ENCODE measurements at regions of chr1 and their contacts with region 1.

Region 1: GRCh38 chr1:110196917-110197765 is 13.0 kb upstream of the KCNC4 start:
- DNase-seq: peak; percentile 42
- ATAC-seq: peak; percentile 95
- H3K4me3 Mint-ChIP-seq: no peak overlapping the region
- H3K27ac Mint-ChIP-seq: no peak overlapping the region
- H3K4me1 Mint-ChIP-seq: peaks cover 2% of the 10 kb centered on the region; the same call in 1 of the 2 replicates
- H3K27me3 Mint-ChIP-seq: no peaks in the 10 kb centered on the region
- CTCF ChIP-seq: peak; percentile 87

Region 2: DNA sequence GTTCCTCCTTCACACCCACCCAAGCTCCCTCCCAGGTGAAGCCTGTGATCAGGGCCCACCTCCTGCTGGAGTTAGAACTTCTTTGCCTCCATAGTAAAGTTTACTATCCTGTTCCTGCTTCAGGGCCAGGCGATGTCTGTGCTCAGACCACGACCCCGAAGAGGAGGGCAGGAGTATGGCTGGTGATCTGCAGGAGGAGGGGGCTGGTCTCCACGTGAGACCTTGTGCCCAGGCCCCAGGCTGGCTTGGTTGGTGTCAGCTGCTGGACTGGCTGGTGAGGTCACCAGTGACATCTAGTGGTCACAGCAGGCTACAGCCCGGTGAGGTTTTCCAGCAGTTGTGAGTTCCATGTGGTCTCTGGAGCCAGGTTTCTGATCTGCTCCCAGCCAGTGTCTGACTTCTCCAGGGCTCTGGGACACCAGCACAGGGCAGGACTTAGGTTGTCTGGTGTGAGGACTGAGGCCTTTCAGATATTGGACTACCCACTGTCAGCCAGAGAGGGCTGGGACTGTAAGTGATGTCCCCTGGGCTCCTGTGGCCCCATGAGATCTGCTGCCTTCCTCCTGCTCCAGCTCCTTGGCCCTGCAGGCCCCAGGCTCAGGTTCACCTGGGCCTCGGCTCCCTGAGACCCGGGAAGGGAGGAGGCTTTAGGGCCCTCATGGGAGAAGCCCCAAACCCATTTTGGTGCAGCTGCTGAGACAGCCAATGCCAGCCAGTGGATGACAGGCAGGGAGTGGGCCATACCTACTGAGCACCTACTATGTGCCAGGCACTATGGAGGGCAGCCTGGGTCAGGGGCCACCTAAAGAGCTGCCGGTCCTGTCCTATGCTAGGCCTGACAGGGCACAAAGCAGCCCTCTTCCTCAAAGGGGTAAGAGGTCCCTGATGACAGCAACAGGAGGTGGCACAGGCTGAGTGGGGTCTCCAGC is 90.9 kb before region 1 on chr1:
- CTCF ChIA-PET with region 1: interaction called, 10 read pairs
- POLR2A ChIA-PET with region 1: no interaction called
- DNase-seq: peak; percentile 83
- ATAC-seq: peak; percentile 97
- H3K4me3 Mint-ChIP-seq: no peak overlapping the region
- H3K27ac Mint-ChIP-seq: no peak overlapping the region
- H3K4me1 Mint-ChIP-seq: no peaks in the 10 kb centered on the region
- H3K27me3 Mint-ChIP-seq: no peaks in the 10 kb centered on the region
- CTCF ChIP-seq: peak; percentile 81

Region 3: GRCh38 chr1:110229348-110230001 is 32.3 kb after region 1 on chr1:
- CTCF ChIA-PET with region 1: no interaction called
- POLR2A ChIA-PET with region 1: no interaction called
- DNase-seq: no peak
- ATAC-seq: peak; percentile 59
- H3K4me3 Mint-ChIP-seq: no peak overlapping the region
- H3K27ac Mint-ChIP-seq: peak overlapping the region; percentile 66
- H3K4me1 Mint-ChIP-seq: peaks cover 4% of the 10 kb centered on the region
- H3K27me3 Mint-ChIP-seq: no peaks in the 10 kb centered on the region
- CTCF ChIP-seq: no peak

Region 4: DNA sequence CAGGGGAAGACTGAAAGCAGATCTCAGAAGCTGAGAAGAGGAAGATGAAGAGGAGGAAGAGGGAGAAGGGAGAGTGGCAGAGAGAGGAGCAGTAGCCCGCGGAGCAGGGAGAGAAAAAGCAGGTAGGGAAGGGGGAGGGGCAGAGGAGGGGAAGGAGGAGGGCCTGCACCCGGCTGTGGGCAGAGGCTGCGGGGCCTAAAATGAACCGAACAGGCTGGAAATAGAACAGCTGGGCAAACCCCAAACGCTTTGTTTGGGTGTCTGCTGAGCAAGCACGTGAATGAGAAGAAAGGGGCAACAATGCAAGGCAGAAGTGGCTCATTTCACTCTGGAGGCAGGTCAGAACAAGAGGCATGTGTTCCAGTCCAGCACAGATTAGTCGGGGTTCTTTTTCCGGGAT is 46.4 kb after region 1 on chr1:
- CTCF ChIA-PET with region 1: interaction called, 11 read pairs
- POLR2A ChIA-PET with region 1: no interaction called
- DNase-seq: peak; percentile 31
- ATAC-seq: peak; percentile 73
- H3K4me3 Mint-ChIP-seq: no peak overlapping the region
- H3K27ac Mint-ChIP-seq: no peak overlapping the region
- H3K4me1 Mint-ChIP-seq: peaks cover 39% of the 10 kb centered on the region
- H3K27me3 Mint-ChIP-seq: peaks cover 16% of the 10 kb centered on the region; the same call in 1 of the 2 replicates
- CTCF ChIP-seq: no peak

Region 5: DNA sequence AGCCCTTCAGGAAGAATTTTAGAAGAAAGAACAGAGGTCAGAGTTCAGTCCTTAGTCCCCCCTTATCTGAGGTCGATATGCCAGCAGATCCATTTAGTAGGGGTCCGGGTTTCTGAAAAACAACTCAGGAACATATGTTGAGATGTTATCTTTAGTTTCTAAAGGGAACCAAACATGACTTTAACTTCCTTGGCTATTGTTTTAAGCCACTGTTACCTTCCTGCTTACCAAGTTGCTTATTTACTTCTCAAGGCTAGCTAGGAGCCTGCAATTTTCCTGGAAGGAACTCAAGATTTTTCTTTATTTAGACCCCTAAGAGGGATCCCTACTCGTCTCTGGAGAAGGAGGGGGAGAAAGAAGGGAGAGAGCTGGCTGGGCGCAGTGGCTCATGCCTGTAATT is 67.3 kb after region 1 on chr1:
- CTCF ChIA-PET with region 1: no interaction called
- POLR2A ChIA-PET with region 1: no interaction called
- DNase-seq: no peak
- ATAC-seq: no peak
- H3K4me3 Mint-ChIP-seq: no peak overlapping the region
- H3K27ac Mint-ChIP-seq: no peak overlapping the region
- H3K4me1 Mint-ChIP-seq: peaks cover 19% of the 10 kb centered on the region
- H3K27me3 Mint-ChIP-seq: peaks cover 15% of the 10 kb centered on the region
- CTCF ChIP-seq: no peak

Region 6: DNA sequence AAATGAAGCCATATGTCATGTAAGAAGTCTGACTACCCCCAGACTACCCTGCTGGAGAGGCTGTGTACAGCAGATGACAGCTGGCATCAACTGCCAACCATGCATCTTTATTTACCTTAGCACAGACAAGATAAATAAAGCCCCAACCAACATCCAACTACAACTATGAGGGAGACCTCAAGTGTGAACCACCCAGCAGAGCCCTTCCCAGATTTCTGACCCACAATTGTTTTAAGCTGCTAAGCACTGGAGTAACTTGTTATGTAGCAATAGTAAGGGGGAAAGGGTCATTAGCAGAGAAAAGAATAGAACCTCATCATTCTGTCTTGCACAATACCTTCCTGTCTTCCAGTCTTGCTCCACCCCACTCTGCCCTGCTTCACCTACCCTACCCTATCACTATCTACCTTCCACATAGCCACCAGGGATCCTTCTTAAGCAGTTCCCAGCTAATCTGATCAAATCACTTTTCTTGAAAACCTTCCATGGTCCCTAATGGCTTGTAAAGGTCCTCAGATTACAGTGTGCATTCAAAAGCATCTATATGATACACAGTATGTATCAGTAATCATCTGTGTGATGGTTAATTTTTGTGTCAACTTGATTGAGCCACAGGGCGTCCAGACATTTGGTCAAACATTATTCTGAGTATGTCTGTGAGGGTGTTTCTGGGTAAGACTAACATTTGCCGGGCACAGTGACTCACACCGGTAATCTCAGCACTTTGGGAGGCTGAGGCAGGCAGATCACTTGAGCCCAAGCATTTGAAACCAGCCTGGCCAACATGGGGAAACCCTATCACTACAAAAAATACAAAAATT is 122.4 kb after region 1 on chr1:
- CTCF ChIA-PET with region 1: interaction called, 76 read pairs
- POLR2A ChIA-PET with region 1: no interaction called
- DNase-seq: no peak
- ATAC-seq: no peak
- H3K4me3 Mint-ChIP-seq: no peak overlapping the region
- H3K27ac Mint-ChIP-seq: no peak overlapping the region
- H3K4me1 Mint-ChIP-seq: no peaks in the 10 kb centered on the region
- H3K27me3 Mint-ChIP-seq: no peaks in the 10 kb centered on the region
- CTCF ChIP-seq: no peak

Region 7: DNA sequence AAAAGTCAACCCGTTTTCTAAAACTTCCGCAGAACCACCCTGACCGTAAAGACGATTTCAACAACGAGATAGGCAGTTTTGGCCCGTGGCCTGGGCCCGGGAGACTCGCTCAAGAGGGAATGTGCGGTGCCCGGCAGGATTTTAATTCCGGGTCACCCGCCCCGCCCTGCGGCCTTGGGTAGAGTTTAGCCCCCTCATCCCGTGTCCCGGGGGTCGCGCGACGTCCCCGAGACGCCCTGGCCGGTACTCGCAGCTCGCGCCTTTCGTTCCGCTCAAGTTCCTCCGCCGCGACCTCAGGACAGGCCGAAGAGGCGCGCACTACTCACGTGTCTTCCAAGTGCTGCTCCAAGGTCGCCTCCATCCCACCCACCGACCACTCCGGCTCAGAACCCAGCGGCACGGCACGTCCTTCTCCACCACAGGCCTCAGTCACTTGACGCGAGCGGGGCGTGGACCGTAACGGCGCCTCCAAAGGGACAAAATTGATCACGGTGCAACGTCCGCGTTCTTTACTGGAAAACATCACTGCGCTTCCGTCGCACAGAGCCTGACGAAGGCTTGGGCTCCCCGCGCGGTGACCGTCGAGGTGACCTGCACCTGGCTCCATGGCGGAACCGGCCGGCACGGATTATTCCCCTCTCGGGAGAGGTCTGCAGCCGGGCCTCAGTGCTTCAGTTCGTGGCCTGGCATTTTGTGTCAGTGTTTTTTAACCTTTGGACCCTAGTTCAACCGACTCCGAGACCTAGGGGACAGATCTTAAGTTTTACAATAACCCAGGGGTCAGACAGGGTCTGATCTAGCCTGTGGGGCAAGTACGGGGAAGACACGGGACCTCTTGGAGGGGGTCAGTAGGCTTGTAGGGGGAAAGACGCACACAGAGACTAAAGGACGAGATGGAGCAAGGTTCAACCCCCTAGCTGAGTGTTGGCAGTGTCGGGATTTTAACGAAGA is 210.4 kb after region 1 on chr1 and contains the start of gene LAMTOR5:
- CTCF ChIA-PET with region 1: interaction called, 15 read pairs
- POLR2A ChIA-PET with region 1: no interaction called
- DNase-seq: peak; percentile 87
- ATAC-seq: peak; percentile 89
- H3K4me3 Mint-ChIP-seq: peak within 1 kb of the TSS; percentile 97
- H3K27ac Mint-ChIP-seq: peak within 1 kb of the TSS; percentile 98
- H3K4me1 Mint-ChIP-seq: peaks cover 14% of the 10 kb centered on the region
- H3K27me3 Mint-ChIP-seq: 0 out of 2 replicates have a peak, but pooled peaks cover 2% of the 10 kb centered on the region
- CTCF ChIP-seq: no peak
- total RNA-seq, gene LAMTOR5: 76.0 to 106 TPM (median 93.0 TPM) in 3 replicates

Region 8: GRCh38 chr1:110455151-110455550 is 258.0 kb after region 1 on chr1:
- CTCF ChIA-PET with region 1: interaction called, 58 read pairs
- POLR2A ChIA-PET with region 1: no interaction called
- DNase-seq: peak; percentile 74
- ATAC-seq: peak; percentile 90
- H3K4me3 Mint-ChIP-seq: no peak overlapping the region
- H3K27ac Mint-ChIP-seq: peak overlapping the region; percentile 63; the same call in 1 of the 2 replicates
- H3K4me1 Mint-ChIP-seq: peaks cover 15% of the 10 kb centered on the region
- H3K27me3 Mint-ChIP-seq: no peaks in the 10 kb centered on the region; the same call in 1 of the 2 replicates
- CTCF ChIP-seq: no peak

Measured in WTC11 (cell line).